Endothelial cell of umbilical vein (primary cell): ENCODE measurements at regions of chr10 and their contacts with region 1.

Region 1: GRCh38 chr10:11782793-11783557 is 40.2 kb upstream of the PROSER2 start:
- DNase-seq: peak; percentile 64
- H3K4me3 ChIP-seq: no peak overlapping the region
- H3K27ac ChIP-seq: no peak overlapping the region
- H3K4me1 ChIP-seq: no peaks in the 10 kb centered on the region
- H3K27me3 ChIP-seq: peaks cover 0 to 4% of the 10 kb centered on the region in 2 experiments
- CTCF ChIP-seq: peak; percentile 45 to 55
- POLR2A ChIP-seq: no peak

Region 2: GRCh38 chr10:11525503-11525902 is 257.5 kb before region 1 on chr10:
- CTCF ChIA-PET with region 1: no interaction called
- POLR2A ChIA-PET with region 1: no interaction called
- dilution Hi-C with region 1: no loop called
- intact Hi-C with region 1: no loop called
- DNase-seq: no peak
- H3K4me3 ChIP-seq: no peak overlapping the region
- H3K27ac ChIP-seq: no peak overlapping the region
- H3K4me1 ChIP-seq: no peaks in the 10 kb centered on the region
- H3K27me3 ChIP-seq: no peaks in the 10 kb centered on the region
- CTCF ChIP-seq: no peak
- POLR2A ChIP-seq: no peak

Region 3: DNA sequence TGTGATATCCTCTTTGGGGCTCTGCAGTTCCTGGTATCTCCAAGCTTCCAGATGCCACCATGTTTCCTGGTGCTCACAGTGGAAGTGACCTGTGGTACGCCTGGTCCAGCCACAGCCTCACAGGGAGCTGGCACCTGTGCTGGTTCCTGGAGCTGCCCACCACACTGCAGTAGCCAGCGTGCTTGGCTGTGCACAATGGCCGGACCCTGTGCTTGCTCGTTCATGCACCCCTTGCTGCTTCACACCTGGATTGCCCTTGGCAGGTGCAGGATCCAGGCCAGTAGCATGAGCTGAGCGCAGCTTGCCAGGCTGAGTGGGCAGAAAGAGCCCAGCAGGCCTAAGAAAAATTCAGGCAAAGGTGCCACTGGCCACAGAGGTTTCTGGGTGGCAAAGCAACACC is 52.2 kb before region 1 on chr10:
- CTCF ChIA-PET with region 1: no interaction called
- POLR2A ChIA-PET with region 1: no interaction called
- dilution Hi-C with region 1: no loop called
- intact Hi-C with region 1: no loop called
- DNase-seq: no peak
- H3K4me3 ChIP-seq: no peak overlapping the region
- H3K27ac ChIP-seq: no peak overlapping the region
- H3K4me1 ChIP-seq: no peaks in the 10 kb centered on the region
- H3K27me3 ChIP-seq: peaks cover 0 to 1% of the 10 kb centered on the region in 2 experiments
- CTCF ChIP-seq: no peak
- POLR2A ChIP-seq: no peak

Region 4: DNA sequence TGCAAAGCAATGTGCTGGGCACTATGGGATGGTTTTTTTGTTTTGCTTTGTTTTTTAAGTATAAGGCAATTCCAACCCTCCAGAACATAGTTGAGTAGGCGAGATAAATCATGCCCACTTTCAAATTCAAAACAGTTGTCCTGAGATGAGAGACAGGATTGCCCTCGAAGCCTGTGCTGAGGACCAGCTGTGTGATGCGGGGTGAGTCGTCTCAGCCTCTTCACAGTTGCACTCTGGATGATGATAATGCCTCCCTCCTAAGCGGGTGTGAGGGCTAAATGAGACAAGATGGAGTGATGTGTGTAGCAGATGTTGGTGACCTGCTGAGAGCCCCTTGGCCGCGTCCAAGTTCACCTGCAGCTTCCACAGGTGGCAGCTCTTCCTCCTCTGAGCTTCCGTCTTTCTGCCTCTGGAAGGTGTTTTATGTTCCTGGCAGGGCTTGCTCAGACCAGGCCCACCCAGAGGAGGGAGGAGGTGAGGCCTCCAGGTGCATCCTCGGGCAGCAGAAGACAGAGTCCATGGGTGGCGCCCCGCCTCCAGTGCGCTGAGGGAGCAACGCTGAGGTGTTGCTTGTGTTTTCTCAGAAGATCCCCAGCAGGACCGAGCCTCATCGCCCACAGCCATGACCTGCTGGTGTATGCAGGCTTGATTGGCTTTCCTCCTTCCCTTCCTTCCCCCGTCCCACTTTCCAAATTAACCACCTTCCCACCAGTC is 10.2 kb before region 1 on chr10:
- CTCF ChIA-PET with region 1: interaction called, 20 read pairs
- POLR2A ChIA-PET with region 1: no interaction called
- dilution Hi-C with region 1: no loop called
- intact Hi-C with region 1: no loop called
- DNase-seq: no peak
- H3K4me3 ChIP-seq: no peak overlapping the region
- H3K27ac ChIP-seq: no peak overlapping the region
- H3K4me1 ChIP-seq: no peaks in the 10 kb centered on the region
- H3K27me3 ChIP-seq: peaks cover 2% of the 10 kb centered on the region in 2 experiments
- CTCF ChIP-seq: no peak
- POLR2A ChIP-seq: no peak

Region 5: DNA sequence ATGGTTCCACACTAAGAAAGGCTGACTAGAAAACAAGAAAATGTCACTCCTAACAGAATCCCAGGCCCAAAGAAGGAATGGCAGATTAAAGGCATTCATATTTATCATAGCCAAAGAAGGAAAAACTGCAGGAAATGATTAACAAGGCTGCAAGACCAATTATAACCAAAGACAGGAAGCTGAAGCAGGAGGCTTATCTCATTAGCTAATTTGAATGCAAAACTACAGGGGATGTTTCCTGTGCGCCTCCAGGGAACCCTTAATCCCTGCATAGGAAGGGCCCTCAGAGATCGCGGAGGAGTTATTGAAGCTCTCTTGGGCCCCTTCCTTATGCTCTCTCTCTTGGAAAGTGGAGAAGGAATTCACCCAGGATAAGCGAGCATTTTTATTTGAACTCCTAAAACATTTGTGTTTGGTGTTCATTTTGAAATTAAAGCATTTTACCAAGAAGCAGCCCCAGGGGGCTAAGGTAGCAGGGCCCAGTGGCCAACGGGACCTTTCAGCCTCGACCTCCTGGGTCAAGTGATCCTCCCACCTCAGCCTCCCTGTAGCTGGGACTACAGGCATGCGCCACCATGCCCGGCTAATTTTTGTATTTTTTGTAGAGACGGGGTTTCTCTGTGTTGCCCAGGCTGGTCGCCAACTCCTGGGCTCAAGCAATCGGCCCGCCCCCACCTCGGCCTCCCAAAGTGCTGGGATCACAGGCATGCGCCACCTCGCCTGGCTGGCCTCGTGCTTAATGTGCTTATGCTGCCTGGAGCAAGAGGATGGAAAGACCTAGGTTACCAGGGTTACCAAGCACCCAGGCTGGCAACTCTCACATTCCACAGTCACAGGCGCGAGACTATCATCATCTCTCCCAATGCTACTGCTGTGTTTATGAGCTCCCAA is 16.1 kb after region 1 on chr10:
- CTCF ChIA-PET with region 1: interaction called, 39 read pairs
- POLR2A ChIA-PET with region 1: no interaction called
- dilution Hi-C with region 1: no loop called
- intact Hi-C with region 1: no loop called
- DNase-seq: peak; percentile 90
- H3K4me3 ChIP-seq: no peak overlapping the region
- H3K27ac ChIP-seq: peak overlapping the region; percentile 66
- H3K4me1 ChIP-seq: peaks cover 17% of the 10 kb centered on the region
- H3K27me3 ChIP-seq: no peaks in the 10 kb centered on the region
- CTCF ChIP-seq: no peak
- POLR2A ChIP-seq: peak; percentile 61

Region 6: DNA sequence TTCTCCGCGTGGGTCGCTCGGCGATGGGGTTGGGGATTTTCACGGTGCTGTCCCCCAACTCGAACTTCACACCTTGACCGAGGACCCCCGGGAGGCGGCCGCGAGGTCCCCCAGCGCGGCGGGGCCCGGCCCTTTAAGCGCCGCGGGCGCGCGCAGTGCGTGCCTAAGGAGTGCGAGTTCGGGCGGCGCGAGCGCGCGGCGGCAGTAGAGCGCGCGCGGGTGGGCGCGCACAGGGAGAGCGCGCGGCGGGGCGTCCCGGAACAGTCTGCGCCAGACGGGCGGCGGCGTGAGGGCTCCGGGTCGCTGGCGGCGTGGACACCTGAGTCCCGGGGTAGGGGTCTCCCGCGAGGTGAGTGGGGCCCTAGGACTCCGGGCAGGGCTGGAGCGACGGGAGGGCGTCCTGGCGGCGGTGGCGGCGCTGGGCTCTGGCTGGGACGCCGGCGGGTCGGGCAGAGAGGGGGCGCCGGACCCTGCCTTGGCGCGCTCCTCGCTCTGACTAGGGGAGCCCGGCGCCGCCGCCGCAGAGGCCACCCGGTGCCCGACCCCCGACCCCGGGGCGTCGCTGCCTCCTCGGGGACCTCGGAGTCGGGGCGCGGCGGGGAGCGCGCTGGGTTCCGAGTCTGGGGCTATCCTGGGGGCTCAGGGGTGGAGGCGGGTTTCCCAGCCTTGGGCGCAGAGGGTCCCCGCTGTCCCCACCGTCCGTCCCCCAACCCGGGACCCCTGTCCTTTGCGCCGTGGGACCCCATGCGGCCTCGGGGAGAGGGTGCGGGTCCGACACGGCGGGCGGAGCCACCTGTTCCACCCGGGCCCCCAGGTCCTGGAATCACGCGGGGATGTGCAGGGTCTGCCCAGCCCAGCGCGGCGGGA is 40.4 kb after region 1 on chr10 and contains the start of gene PROSER2:
- CTCF ChIA-PET with region 1: interaction called, 94 read pairs
- POLR2A ChIA-PET with region 1: no interaction called
- dilution Hi-C with region 1: no loop called
- intact Hi-C with region 1: loop called (anchors 5 kb)
- DNase-seq: peak; percentile 70
- H3K4me3 ChIP-seq: peak within 1 kb of the TSS; percentile 82 to 99 (median 89)
- H3K27ac ChIP-seq: peak within 1 kb of the TSS; percentile 43
- H3K4me1 ChIP-seq: peaks cover 4% of the 10 kb centered on the region
- H3K27me3 ChIP-seq: no peaks in the 10 kb centered on the region
- CTCF ChIP-seq: no peak
- POLR2A ChIP-seq: peak; percentile 81
- total RNA-seq, gene PROSER2: 22.6 and 23.5 TPM in 2 replicates

Region 7: DNA sequence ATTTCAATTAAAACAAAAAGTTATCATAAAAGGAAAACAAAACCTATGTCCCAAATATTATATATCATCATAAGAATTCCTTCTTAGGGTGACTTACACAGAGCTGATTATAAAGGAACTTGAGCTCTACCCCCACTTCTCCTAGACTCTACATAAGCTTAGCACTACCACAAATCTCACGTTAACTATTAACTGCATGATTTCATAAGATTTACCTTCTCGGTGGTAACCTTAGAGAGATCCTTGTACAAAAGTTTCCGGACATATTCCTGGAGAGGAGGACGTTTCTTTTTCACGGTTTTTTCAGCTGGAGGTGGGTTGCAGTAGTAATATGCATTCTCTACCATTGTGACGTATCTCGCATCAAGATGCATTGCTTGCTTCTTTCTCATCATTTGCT is 176.0 kb after region 1 on chr10:
- CTCF ChIA-PET with region 1: interaction called, 10 read pairs
- POLR2A ChIA-PET with region 1: no interaction called
- dilution Hi-C with region 1: no loop called
- intact Hi-C with region 1: no loop called
- DNase-seq: no peak
- H3K4me3 ChIP-seq: no peak overlapping the region
- H3K27ac ChIP-seq: no peak overlapping the region
- H3K4me1 ChIP-seq: no peaks in the 10 kb centered on the region
- H3K27me3 ChIP-seq: no peaks in the 10 kb centered on the region
- CTCF ChIP-seq: no peak
- POLR2A ChIP-seq: no peak

Region 8: GRCh38 chr10:11986593-11987216 is 203.7 kb after region 1 on chr10:
- CTCF ChIA-PET with region 1: interaction called, 244 read pairs
- POLR2A ChIA-PET with region 1: no interaction called
- dilution Hi-C with region 1: no loop called
- intact Hi-C with region 1: loop called (anchors 1 kb)
- DNase-seq: peak; percentile 86
- H3K4me3 ChIP-seq: no peak overlapping the region
- H3K27ac ChIP-seq: no peak overlapping the region
- H3K4me1 ChIP-seq: no peaks in the 10 kb centered on the region
- H3K27me3 ChIP-seq: no peaks in the 10 kb centered on the region
- CTCF ChIP-seq: peak; percentile 70 to 73
- POLR2A ChIP-seq: no peak

Region 9: GRCh38 chr10:12201543-12201942 is 418.6 kb after region 1 on chr10:
- CTCF ChIA-PET with region 1: no interaction called
- POLR2A ChIA-PET with region 1: no interaction called
- dilution Hi-C with region 1: no loop called
- intact Hi-C with region 1: no loop called
- DNase-seq: no peak
- H3K4me3 ChIP-seq: no peak overlapping the region
- H3K27ac ChIP-seq: no peak overlapping the region
- H3K4me1 ChIP-seq: peaks cover 4% of the 10 kb centered on the region
- H3K27me3 ChIP-seq: no peaks in the 10 kb centered on the region
- CTCF ChIP-seq: no peak
- POLR2A ChIP-seq: no peak